Posterior vena cava (tissue), 2 donors: ENCODE measurements at regions of chr7 and their contacts with region 1.

Region 1: GRCh38 chr7:21542891-21543527 is at the start of gene DNAH11:
- DNase-seq: no peak
- total RNA-seq, gene DNAH11: 0.51 to 0.81 TPM

Region 2: GRCh38 chr7:19701471-19701870 is 1841.5 kb before region 1 on chr7:
- intact Hi-C with region 1: loop called in 1 of 2 experiments (anchors 5 kb)
- DNase-seq: no peak

Region 3: GRCh38 chr7:21355406-21355874 is 187.6 kb before region 1 on chr7:
- intact Hi-C with region 1: no loop called
- DNase-seq: no peak

Region 4: DNA sequence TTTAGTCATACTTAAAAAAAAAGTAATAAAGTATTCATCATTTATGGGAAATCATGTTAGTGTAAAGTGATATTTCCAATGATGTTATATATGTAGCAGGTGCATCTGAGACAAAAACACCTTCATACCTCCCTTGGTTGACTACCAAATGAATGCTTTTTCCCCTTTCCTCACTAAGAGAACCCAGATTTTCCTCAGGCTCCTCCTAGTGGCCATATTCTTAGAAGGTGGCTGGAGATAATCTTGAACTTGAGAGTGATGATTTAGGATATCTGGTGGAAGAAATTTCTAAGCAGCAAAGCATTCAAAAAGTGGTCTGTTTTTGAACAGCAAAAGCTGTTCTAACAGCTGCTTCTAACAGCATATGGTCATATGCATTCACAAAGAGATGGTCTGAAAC is 17.0 kb before region 1 on chr7:
- intact Hi-C with region 1: loop called in 1 of 2 experiments (anchors 1 kb)
- DNase-seq: no peak